ENCODE measurements at regions of chr2 and their contacts with region 1.

Region 1: GRCh38 chr2:12931186-12931844 is 214.6 kb downstream of the TRIB2 start:
- DNase-seq: peak; percentile 67
- ATAC-seq: peak; percentile 16; the same call in 1 of the 2 replicates
- H3K4me3 ChIP-seq: no peak overlapping the region
- H3K27ac ChIP-seq: peak overlapping the region; percentile 97
- H3K4me1 ChIP-seq: peaks cover 33% of the 10 kb centered on the region
- H3K27me3 ChIP-seq: no peaks in the 10 kb centered on the region
- CTCF ChIP-seq: peak; percentile 94

Region 2: DNA sequence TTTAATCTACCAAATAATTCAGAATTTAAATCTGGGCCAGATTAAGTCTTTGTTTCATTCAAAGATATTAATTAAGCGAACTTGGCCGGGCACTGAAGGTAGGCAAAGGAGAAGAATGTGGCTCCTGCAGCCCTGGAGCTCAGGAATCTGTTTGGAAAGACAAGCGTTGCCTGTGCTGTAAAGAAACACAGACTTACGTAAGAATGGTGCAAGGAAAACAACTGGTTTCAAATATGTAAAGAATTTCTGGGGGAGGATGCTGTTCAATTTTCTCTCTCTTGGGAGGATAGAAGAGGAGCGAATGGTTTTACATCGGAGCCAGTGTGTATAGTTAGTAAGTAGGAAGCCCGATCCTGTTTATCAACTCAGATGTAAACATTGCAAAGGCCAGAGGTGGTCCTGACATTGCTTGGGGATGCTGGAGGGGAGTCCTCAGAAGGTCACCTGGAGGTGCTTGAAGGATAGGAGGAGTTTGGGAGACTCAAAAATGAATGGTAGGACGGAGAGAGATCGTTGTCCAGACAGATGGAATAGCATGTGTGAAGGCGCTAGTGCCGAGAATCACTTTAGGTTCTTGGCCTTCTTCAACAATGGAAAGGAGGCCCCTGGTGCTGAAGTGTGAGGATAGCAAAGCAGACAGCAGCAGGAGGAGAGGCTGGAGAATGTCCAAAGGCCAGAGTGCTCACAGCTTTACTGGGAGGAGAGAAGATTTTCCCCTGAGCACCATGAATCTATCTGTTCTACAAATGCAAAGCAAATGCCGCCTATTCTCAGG is 728.8 kb before region 1 on chr2:
- CTCF ChIA-PET with region 1: no interaction called
- POLR2A ChIA-PET with region 1: no interaction called
- intact Hi-C with region 1: no loop called
- DNase-seq: no peak
- ATAC-seq: no peak
- H3K4me3 ChIP-seq: no peak overlapping the region
- H3K27ac ChIP-seq: no peak overlapping the region
- H3K4me1 ChIP-seq: no peaks in the 10 kb centered on the region
- H3K27me3 ChIP-seq: no peaks in the 10 kb centered on the region
- CTCF ChIP-seq: no peak

Region 3: DNA sequence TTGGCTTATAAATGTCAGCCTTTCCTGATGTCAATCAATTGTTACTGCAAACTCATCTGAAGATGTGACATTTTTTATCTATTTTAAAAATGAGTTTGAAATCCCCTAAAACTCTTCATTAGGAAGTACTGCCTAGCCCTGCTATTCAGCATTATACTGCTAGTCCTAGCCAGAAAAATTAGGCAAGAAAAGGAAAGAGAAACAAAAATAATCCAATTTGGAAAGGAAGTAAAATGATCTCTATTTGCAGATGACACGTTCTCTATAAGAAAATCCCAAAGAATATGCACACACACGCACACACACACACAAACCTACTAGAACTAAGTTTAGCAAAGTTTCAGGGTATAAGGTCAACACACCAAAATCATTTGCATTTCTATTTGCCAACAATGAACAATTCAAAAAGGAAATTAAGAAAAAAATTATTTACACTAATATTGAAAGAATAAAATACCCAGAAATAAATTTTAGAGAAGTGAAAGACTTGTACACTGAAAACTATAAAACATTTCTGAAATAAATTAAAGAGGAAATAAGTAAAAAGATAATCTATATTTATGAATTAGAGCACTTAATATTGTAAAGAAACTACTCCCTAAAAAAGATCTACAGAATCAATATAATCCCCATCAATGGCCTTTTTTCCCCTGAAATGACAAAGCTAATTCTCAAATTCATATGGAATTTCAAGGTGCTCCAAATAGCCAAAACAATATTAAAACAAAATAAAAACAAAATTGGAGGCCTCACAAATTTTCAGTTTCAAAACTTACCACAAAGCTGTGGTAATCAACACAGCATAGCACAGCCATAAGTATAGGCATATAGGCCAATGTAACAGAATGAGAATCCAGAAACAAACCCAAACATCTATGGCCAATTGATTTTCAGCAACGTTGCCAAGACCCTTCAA is 648.3 kb before region 1 on chr2:
- CTCF ChIA-PET with region 1: no interaction called
- POLR2A ChIA-PET with region 1: no interaction called
- intact Hi-C with region 1: loop called (anchors 2 kb)
- DNase-seq: no peak
- ATAC-seq: no peak
- H3K4me3 ChIP-seq: no peak overlapping the region
- H3K27ac ChIP-seq: no peak overlapping the region
- H3K4me1 ChIP-seq: peaks cover 36% of the 10 kb centered on the region
- H3K27me3 ChIP-seq: no peaks in the 10 kb centered on the region
- CTCF ChIP-seq: no peak

Region 4: GRCh38 chr2:12797815-12798214 is 133.5 kb before region 1 on chr2:
- CTCF ChIA-PET with region 1: interaction called, 4 read pairs
- POLR2A ChIA-PET with region 1: no interaction called
- intact Hi-C with region 1: loop called (anchors 5 kb)
- DNase-seq: peak; percentile 69
- ATAC-seq: peak; percentile 50
- H3K4me3 ChIP-seq: no peak overlapping the region
- H3K27ac ChIP-seq: peak overlapping the region; percentile 4; the same call in 1 of the 2 replicates
- H3K4me1 ChIP-seq: peaks cover 9% of the 10 kb centered on the region
- H3K27me3 ChIP-seq: no peaks in the 10 kb centered on the region
- CTCF ChIP-seq: no peak

Region 5: GRCh38 chr2:12856934-12857601 is 74.2 kb before region 1 on chr2:
- CTCF ChIA-PET with region 1: no interaction called
- POLR2A ChIA-PET with region 1: no interaction called
- intact Hi-C with region 1: loop called (anchors 1 kb)
- DNase-seq: peak; percentile 92
- ATAC-seq: peak; percentile 69
- H3K4me3 ChIP-seq: peak overlapping the region; percentile 40
- H3K27ac ChIP-seq: peak overlapping the region; percentile 79
- H3K4me1 ChIP-seq: peaks cover 34% of the 10 kb centered on the region
- H3K27me3 ChIP-seq: no peaks in the 10 kb centered on the region
- CTCF ChIP-seq: no peak

Region 6: DNA sequence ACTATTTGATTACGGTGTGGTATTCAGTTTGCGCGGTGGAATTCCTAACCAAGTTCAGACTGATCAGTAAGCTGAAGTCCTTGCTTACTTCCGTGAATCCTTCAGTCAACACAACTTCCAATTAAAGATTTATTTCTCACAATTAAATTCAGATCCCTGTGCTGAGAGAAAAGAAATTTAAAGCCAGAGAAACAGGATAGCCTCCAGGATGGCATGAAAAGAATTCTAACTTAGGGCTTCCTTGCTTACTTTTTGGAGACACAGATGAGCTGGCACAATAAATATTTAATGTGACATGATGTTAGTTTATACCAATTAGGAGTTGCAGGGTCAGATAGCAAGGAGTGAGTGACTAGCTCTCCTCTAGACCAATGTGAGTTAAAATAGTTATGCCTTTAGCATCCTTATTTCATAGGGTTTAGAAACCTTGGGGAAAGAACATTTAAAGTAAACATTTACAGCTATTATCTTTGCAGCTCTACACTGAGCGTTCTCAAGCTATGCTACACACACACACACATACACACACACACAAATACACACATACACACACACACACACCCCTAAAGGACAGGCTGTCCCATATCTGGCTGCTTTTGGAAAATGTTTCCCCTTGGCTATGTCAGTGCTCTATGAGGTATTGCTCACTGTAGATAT is 63.6 kb before region 1 on chr2:
- CTCF ChIA-PET with region 1: no interaction called
- POLR2A ChIA-PET with region 1: no interaction called
- intact Hi-C with region 1: loop called (anchors 2 kb)
- DNase-seq: peak; percentile 11
- ATAC-seq: peak; percentile 59
- H3K4me3 ChIP-seq: no peak overlapping the region
- H3K27ac ChIP-seq: no peak overlapping the region
- H3K4me1 ChIP-seq: 0 out of 2 replicates have a peak, but pooled peaks cover 6% of the 10 kb centered on the region
- H3K27me3 ChIP-seq: no peaks in the 10 kb centered on the region
- CTCF ChIP-seq: no peak

Region 7: DNA sequence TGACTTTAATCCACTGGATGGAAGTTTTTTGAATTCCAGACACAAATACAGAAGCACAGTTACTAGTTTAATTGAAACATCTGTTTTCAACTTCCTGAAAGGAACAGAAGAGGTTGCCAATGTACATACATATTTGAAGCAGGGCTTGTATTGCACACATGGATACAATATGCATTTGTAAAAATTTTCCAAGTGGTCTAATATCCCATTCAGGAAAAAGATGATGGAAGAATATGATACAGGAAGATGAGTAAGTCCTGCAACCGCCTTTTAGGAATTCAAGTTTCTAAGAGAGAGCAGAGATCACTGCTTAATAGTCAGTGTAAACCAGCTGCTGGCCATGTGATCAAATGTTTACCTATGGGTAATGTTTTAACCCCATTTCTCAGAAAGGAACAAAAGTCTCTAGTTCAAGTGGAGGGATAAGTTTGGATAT is 50.9 kb after region 1 on chr2:
- CTCF ChIA-PET with region 1: no interaction called
- POLR2A ChIA-PET with region 1: no interaction called
- intact Hi-C with region 1: no loop called
- DNase-seq: no peak
- ATAC-seq: no peak
- H3K4me3 ChIP-seq: no peak overlapping the region
- H3K27ac ChIP-seq: no peak overlapping the region
- H3K4me1 ChIP-seq: no peaks in the 10 kb centered on the region
- H3K27me3 ChIP-seq: no peaks in the 10 kb centered on the region
- CTCF ChIP-seq: no peak

Region 8: DNA sequence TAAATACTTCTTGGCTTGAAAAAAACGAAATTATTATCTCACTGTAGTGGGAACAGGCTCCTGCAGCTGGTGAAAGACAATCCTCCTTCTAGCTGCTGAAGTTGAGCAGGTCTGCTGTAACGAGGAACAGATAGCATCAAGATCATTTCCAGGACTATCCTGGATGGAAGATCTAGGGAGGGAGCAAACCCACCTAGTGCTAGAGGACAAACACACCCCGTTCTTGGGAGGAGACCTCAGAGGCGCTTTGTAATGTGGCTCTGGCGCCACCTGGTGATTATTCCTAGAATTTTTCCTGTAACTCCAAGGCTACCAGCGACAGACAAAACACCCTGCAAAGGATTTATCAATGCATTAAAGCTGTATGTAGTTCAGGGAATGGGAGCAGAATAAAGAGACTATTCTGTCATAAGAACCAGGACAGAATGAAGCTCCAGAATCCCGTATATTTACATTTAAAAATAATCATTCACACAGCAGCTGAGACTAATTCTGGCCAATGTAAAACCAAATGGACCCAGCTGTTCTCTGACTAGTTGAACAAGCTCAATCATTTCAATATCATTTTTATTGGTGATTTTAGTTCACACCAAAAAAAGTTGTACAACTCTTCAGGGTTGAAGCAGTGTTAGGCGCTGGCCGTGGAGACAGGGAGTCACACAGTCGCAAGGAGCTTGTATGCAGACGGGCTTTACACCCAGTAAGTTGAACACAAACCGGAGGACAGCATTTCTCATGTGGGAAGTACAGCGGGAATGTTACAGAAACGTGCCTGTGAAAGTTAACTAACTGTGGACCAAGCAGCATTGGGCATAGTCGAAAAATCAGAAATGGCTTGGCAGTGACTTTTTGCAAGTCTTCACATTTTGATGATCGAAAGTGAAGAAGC is 75.8 kb after region 1 on chr2:
- CTCF ChIA-PET with region 1: interaction called, 6 read pairs
- POLR2A ChIA-PET with region 1: no interaction called
- intact Hi-C with region 1: loop called (anchors 1 kb)
- DNase-seq: peak; percentile 87
- ATAC-seq: peak; percentile 95
- H3K4me3 ChIP-seq: peak overlapping the region; percentile 62
- H3K27ac ChIP-seq: no peak overlapping the region
- H3K4me1 ChIP-seq: peaks cover 7% of the 10 kb centered on the region
- H3K27me3 ChIP-seq: no peaks in the 10 kb centered on the region
- CTCF ChIP-seq: peak; percentile 89

Measured in PC-3 (cell line).